ENCODE measurements at regions of chr4 and their contacts with region 1.

Region 1: DNA sequence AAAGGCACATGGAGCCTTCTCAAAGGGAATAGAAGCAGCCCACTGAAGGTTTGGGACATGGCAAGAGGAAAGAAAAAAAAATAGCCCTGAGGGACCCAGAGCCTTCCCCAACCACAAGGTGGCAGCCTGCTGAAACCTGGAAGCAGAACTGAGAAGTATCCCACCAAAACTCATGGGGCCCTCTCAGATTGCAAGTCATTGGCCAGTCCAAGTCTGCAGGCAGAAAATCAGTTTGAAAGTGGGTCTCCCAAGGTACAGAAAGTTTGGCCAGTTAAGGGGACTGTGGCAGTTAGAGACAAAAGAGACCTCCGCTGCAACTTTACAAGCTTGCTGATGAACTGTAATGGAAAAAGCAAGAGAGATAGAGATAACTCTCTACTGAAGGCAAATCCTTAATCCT is 155.8 kb downstream of the ANTXR2 start:
- DNase-seq: no peak
- H3K4me3 ChIP-seq: no peak overlapping the region
- H3K27ac ChIP-seq: peak overlapping the region in 2 of 4 donors; percentile 1 to 36
- H3K4me1 ChIP-seq: peaks cover 0 to 59% (median 37%) of the 10 kb centered on the region in 4 donors
- H3K27me3 ChIP-seq: no peaks in the 10 kb centered on the region
- CTCF ChIP-seq: peak in 2 of 4 experiments; percentile 18 to 36
- EP300 ChIP-seq: no peak
- POLR2A ChIP-seq: no peak

Region 2: GRCh38 chr4:79757600-79757999 is 159.6 kb before region 1 on chr4:
- intact Hi-C with region 1: no loop called
- DNase-seq: no peak
- H3K4me3 ChIP-seq: no peak overlapping the region
- H3K27ac ChIP-seq: peak overlapping the region in 1 of 4 donors; percentile 22
- H3K4me1 ChIP-seq: peaks cover 0 to 34% (median 19%) of the 10 kb centered on the region in 4 donors
- H3K27me3 ChIP-seq: no peaks in the 10 kb centered on the region
- CTCF ChIP-seq: no peak
- EP300 ChIP-seq: no peak
- POLR2A ChIP-seq: no peak

Region 3: GRCh38 chr4:79823148-79823763 is 94.0 kb before region 1 on chr4:
- intact Hi-C with region 1: no loop called
- DNase-seq: peak; percentile 89
- H3K4me3 ChIP-seq: no peak overlapping the region
- H3K27ac ChIP-seq: peak overlapping the region; percentile 71 to 83 (median 80)
- H3K4me1 ChIP-seq: peaks cover 0 to 24% (median 19%) of the 10 kb centered on the region in 4 donors
- H3K27me3 ChIP-seq: no peaks in the 10 kb centered on the region
- CTCF ChIP-seq: no peak
- EP300 ChIP-seq: peak; percentile 46 to 90 (median 59)
- POLR2A ChIP-seq: no peak

Region 4: GRCh38 chr4:79949178-79949577 is 31.9 kb after region 1 on chr4:
- intact Hi-C with region 1: loop called (anchors 5 kb)
- DNase-seq: no peak
- H3K4me3 ChIP-seq: no peak overlapping the region
- H3K27ac ChIP-seq: peak overlapping the region in 2 of 4 donors; percentile 4 to 39
- H3K4me1 ChIP-seq: peaks cover 0 to 44% (median 17%) of the 10 kb centered on the region in 4 donors
- H3K27me3 ChIP-seq: no peaks in the 10 kb centered on the region
- CTCF ChIP-seq: no peak
- EP300 ChIP-seq: no peak
- POLR2A ChIP-seq: no peak

Region 5: GRCh38 chr4:80184053-80184790 is 267.0 kb after region 1 on chr4:
- intact Hi-C with region 1: loop called (anchors 10 kb)
- DNase-seq: peak; percentile 95
- H3K4me3 ChIP-seq: peak overlapping the region; percentile 55 to 80 (median 71)
- H3K27ac ChIP-seq: peak overlapping the region; percentile 76 to 86 (median 85)
- H3K4me1 ChIP-seq: peaks cover 0 to 29% (median 19%) of the 10 kb centered on the region in 4 donors
- H3K27me3 ChIP-seq: no peaks in the 10 kb centered on the region
- CTCF ChIP-seq: peak; percentile 89 to 95 (median 92)
- EP300 ChIP-seq: no peak
- POLR2A ChIP-seq: no peak

Region 6: GRCh38 chr4:80913381-80913780 is 996.1 kb after region 1 on chr4:
- intact Hi-C with region 1: no loop called
- DNase-seq: no peak
- H3K4me3 ChIP-seq: no peak overlapping the region
- H3K27ac ChIP-seq: no peak overlapping the region
- H3K4me1 ChIP-seq: no peaks in the 10 kb centered on the region
- H3K27me3 ChIP-seq: no peaks in the 10 kb centered on the region
- CTCF ChIP-seq: no peak
- EP300 ChIP-seq: no peak
- POLR2A ChIP-seq: no peak